Naive thymus-derived CD4-positive, alpha-beta T cell (primary cell): ENCODE measurements at regions of chr17 and their contacts with region 1.

Region 1: GRCh38 chr17:385926-386876 is 33.6 kb upstream of the RPH3AL start:
- DNase-seq: peak; percentile 27 to 79 (median 57)
- ATAC-seq: peak; percentile 89
- H3K4me3 ChIP-seq: no peak overlapping the region
- H3K4me3 Mint-ChIP-seq: peak overlapping the region; percentile 72 to 94 (median 86)
- H3K27ac ChIP-seq: no peak overlapping the region
- H3K27ac Mint-ChIP-seq: peak overlapping the region in 4 of 9 donors; percentile 39 to 77 (median 62)
- H3K4me1 ChIP-seq: no peaks in the 10 kb centered on the region
- H3K4me1 Mint-ChIP-seq: peaks cover 7 to 30% (median 23%) of the 10 kb centered on the region in 7 donors
- H3K27me3 ChIP-seq: no peaks in the 10 kb centered on the region
- H3K27me3 Mint-ChIP-seq: peaks cover 0 to 38% (median 0%) of the 10 kb centered on the region in 5 donors

Region 2: DNA sequence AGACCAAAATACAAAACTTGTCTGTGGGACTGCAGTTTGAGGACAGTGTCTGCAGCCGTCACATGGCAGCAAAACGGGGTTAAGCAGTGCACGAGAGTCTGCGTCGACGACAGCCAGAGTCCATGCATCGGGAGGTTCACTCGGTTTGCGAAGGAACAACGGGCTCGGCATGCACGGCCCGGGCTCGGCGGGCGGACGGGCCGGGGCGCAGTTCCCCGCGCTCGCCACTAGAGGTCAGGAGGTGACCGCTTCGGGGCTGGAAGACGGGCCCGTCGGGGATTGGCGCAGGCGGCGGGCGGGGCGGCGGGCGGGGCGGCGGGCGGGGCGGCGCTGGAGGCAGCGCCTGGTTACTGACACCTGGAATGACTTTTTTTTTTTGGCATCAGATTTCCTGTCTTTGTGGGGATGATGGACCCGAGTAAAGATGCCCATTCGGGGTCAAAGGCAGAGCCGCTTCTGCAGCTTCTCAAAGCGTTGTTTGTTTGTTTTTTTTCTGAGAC is 242.4 kb before region 1 on chr17:
- CTCF ChIA-PET with region 1: interaction called, 3 read pairs
- POLR2A ChIA-PET with region 1: no interaction called
- intact Hi-C with region 1: loop called (anchors 2 kb)
- DNase-seq: peak; percentile 72 to 94 (median 82)
- ATAC-seq: peak; percentile 98
- H3K4me3 ChIP-seq: no peak overlapping the region
- H3K4me3 Mint-ChIP-seq: peak overlapping the region in 1 of 10 donors; percentile 60
- H3K27ac ChIP-seq: no peak overlapping the region
- H3K27ac Mint-ChIP-seq: no peak overlapping the region
- H3K4me1 ChIP-seq: peaks cover 0 to 4% of the 10 kb centered on the region in 2 donors
- H3K4me1 Mint-ChIP-seq: peaks cover 0 to 6% (median 3%) of the 10 kb centered on the region in 7 donors
- H3K27me3 ChIP-seq: no peaks in the 10 kb centered on the region
- H3K27me3 Mint-ChIP-seq: peaks cover 0 to 12% (median 0%) of the 10 kb centered on the region in 5 donors

Region 3: DNA sequence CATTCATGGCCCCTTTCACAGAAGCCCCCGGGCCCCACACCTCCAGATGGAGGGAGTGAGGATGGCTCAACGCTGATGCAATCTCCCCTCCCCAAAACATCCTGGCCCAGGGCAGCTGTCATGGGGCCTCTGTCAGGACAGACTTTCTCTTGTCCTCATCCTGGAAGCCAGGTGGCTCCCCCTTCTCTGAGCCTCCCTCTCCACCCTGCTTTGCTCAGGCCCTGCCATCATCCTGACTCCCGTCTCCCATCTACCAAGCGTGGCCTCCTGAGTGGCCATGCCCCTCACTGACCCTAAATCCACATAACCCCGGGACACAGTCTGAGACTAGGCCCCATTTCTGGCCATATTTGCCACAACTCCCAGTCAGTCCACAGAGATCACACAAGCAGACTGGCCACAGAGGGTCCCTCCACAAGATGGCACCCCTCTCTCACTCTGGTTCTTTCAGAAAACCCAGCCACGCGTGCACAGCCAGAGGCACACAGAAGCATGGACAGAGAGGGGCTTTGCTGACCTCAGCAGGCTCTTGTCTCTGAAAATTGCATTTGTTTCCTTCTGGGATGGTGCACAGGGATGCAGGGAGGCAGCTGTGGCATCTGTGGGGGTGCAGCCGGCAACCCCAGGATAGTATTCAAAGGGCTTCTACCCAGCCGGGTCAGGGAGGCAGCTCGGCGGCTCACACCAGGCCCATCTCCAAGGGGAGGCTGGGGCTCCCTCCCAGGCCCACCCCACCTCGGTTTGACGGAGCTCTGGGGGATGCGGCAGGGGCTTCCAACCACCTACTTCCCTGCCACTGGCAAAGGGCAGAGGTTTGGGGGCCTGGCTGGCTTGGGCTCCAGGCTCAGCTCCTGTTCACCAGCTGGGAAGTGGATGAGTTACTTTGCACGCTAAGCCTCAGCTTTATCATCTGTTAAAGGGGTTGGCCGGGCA is 221.6 kb before region 1 on chr17:
- CTCF ChIA-PET with region 1: interaction called, 5 read pairs
- POLR2A ChIA-PET with region 1: no interaction called
- intact Hi-C with region 1: loop called in 1 of 2 experiments (anchors 2 kb)
- DNase-seq: peak in 7 of 9 donors; percentile 13 to 45 (median 28)
- ATAC-seq: peak; percentile 54
- H3K4me3 ChIP-seq: no peak overlapping the region
- H3K4me3 Mint-ChIP-seq: no peak overlapping the region
- H3K27ac ChIP-seq: no peak overlapping the region
- H3K27ac Mint-ChIP-seq: no peak overlapping the region
- H3K4me1 ChIP-seq: no peaks in the 10 kb centered on the region
- H3K4me1 Mint-ChIP-seq: peaks cover 0 to 4% (median 0%) of the 10 kb centered on the region in 7 donors
- H3K27me3 ChIP-seq: no peaks in the 10 kb centered on the region
- H3K27me3 Mint-ChIP-seq: peaks cover 0 to 10% (median 0%) of the 10 kb centered on the region in 5 donors

Region 4: GRCh38 chr17:292531-293382 is 93.4 kb before region 1 on chr17:
- CTCF ChIA-PET with region 1: no interaction called
- POLR2A ChIA-PET with region 1: no interaction called
- intact Hi-C with region 1: loop called in 1 of 2 experiments (anchors 5 kb)
- DNase-seq: peak in 4 of 9 donors; percentile 20 to 34 (median 24)
- ATAC-seq: peak; percentile 16
- H3K4me3 ChIP-seq: no peak overlapping the region
- H3K4me3 Mint-ChIP-seq: peak overlapping the region in 8 of 10 donors; percentile 53 to 85 (median 72)
- H3K27ac ChIP-seq: no peak overlapping the region
- H3K27ac Mint-ChIP-seq: peak overlapping the region in 4 of 9 donors; percentile 47 to 86 (median 64)
- H3K4me1 ChIP-seq: no peaks in the 10 kb centered on the region
- H3K4me1 Mint-ChIP-seq: peaks cover 0 to 16% (median 11%) of the 10 kb centered on the region in 7 donors
- H3K27me3 ChIP-seq: no peaks in the 10 kb centered on the region
- H3K27me3 Mint-ChIP-seq: peaks cover 0 to 18% (median 4%) of the 10 kb centered on the region in 5 donors

Region 5: GRCh38 chr17:307741-308507 is 78.3 kb before region 1 on chr17:
- CTCF ChIA-PET with region 1: interaction called, 5 read pairs
- POLR2A ChIA-PET with region 1: no interaction called
- intact Hi-C with region 1: loop called in 1 of 2 experiments (anchors 1 kb)
- DNase-seq: no peak
- ATAC-seq: no peak
- H3K4me3 ChIP-seq: no peak overlapping the region
- H3K4me3 Mint-ChIP-seq: no peak overlapping the region
- H3K27ac ChIP-seq: no peak overlapping the region
- H3K27ac Mint-ChIP-seq: peak overlapping the region in 4 of 9 donors; percentile 9 to 59 (median 24)
- H3K4me1 ChIP-seq: no peaks in the 10 kb centered on the region
- H3K4me1 Mint-ChIP-seq: peaks cover 0 to 4% (median 0%) of the 10 kb centered on the region in 7 donors
- H3K27me3 ChIP-seq: no peaks in the 10 kb centered on the region
- H3K27me3 Mint-ChIP-seq: peaks cover 0 to 10% (median 0%) of the 10 kb centered on the region in 5 donors

Region 6: DNA sequence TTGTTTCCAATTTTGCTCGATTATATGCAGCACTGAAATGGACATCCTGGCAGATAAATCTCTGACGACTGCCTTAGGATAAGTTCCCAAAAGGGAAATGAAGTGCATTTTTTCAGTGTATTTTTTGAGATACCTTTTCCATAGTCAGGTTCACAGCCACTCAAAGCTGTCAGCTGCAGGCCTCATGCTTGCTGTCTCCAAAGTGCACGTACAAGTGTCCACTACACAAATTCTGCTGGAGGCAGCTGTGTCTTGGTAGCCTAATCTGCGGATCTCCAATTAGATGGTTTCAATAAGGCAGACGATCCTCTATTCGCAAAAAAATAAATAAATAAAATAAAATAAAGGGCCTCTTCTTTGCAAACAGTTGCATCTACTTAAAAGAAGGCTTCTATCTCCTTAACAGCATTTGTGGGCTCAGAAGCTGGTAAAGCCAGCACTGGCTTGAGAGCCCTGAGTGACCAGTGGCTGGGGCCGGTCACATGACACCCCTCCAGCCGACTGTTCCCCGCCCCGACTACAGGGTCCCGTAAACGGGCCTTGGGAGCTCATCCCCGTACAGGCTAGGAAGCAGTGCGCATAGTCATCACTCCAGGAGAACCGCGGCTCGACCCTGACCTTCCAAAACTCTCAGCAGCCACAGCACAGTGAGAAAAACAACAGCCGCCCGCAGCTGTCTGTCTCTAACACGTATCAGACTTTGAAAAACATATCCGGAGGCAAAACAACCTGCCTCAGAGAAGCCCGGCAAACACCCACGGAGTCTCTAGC is 52.4 kb before region 1 on chr17:
- CTCF ChIA-PET with region 1: interaction called, 4 read pairs
- POLR2A ChIA-PET with region 1: interaction called, 3 read pairs
- intact Hi-C with region 1: loop called in 1 of 2 experiments (anchors 2 kb)
- DNase-seq: peak in 5 of 9 donors; percentile 34 to 60 (median 35)
- ATAC-seq: peak; percentile 40
- H3K4me3 ChIP-seq: no peak overlapping the region
- H3K4me3 Mint-ChIP-seq: peak overlapping the region in 8 of 10 donors; percentile 52 to 91 (median 81)
- H3K27ac ChIP-seq: peak overlapping the region; percentile 65
- H3K27ac Mint-ChIP-seq: peak overlapping the region in 7 of 9 donors; percentile 93 to 98 (median 95)
- H3K4me1 ChIP-seq: peaks cover 0 to 51% of the 10 kb centered on the region in 2 donors
- H3K4me1 Mint-ChIP-seq: peaks cover 14 to 86% (median 34%) of the 10 kb centered on the region in 7 donors
- H3K27me3 ChIP-seq: no peaks in the 10 kb centered on the region
- H3K27me3 Mint-ChIP-seq: peaks cover 0 to 32% (median 15%) of the 10 kb centered on the region in 5 donors

Region 7: DNA sequence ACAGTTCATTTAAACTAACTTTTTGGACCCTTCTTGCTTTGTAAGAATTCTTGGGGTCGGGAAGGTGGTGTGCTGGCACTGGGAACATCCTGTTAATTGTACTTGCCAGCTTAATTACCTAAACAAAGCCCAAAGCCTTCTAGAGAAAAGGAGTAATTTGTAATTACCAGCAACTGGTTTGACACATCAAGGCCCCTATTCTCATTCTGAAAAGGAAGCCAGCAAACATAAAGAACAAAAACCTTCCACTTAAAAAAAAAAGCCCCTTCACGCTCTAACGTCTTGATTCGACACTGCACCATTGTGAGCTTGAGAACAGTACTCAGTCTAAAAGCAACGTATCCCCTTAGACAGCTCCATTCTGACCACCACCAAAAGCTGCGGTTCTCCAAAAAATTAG is 41.1 kb after region 1 on chr17:
- CTCF ChIA-PET with region 1: no interaction called
- POLR2A ChIA-PET with region 1: no interaction called
- intact Hi-C with region 1: no loop called
- DNase-seq: no peak
- ATAC-seq: no peak
- H3K4me3 ChIP-seq: no peak overlapping the region
- H3K4me3 Mint-ChIP-seq: no peak overlapping the region
- H3K27ac ChIP-seq: no peak overlapping the region
- H3K27ac Mint-ChIP-seq: no peak overlapping the region
- H3K4me1 ChIP-seq: peaks cover 0 to under 1% of the 10 kb centered on the region in 2 donors
- H3K4me1 Mint-ChIP-seq: peaks cover 0 to 24% (median 7%) of the 10 kb centered on the region in 7 donors
- H3K27me3 ChIP-seq: no peaks in the 10 kb centered on the region
- H3K27me3 Mint-ChIP-seq: no peaks in the 10 kb centered on the region

Region 8: DNA sequence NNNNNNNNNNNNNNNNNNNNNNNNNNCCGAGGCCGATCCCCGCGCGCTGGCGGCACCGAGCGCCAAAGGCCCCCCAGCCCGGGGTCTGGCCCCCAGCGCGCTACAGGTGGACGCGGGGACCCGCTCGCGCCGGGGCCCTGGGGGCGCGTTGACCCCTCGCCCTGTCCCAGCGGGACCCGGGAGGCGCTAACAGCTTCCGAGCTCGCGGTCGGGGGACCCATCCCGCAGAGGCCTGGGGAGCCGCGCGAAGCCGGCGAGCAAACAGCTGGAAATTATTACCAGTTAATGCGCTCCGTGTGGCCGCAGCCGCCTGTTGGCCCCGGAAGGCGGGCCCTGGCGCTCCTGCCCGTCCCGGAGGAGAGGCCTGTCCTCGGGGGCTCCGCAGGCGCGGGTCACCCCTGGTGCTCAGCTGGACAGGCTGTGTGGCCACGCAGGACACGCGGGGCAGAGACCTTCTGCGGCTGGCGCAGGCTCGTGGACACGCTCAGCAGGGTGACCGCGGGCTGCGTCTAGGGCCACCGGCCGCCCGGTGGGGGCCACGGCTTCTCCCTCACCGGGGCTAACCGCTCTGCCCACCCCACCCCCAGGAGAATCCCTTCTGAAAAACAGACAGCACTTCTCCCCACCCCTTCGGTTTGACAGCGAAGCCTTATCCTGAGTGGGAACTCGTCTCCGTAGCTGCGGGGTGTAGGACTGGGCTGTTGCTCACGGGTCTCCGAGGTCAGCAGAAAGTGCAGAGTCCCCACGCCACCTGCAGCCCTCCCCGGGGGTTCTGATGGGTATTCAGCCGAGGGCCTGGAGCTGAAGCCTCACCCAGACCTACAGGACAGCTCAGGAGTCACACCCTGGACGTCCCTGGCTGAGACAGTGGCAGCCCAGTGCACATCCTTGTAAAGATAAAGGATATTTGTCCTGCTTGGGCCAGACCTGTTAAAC is 105.2 kb after region 1 on chr17:
- CTCF ChIA-PET with region 1: no interaction called
- POLR2A ChIA-PET with region 1: no interaction called
- intact Hi-C with region 1: no loop called
- DNase-seq: peak in 8 of 9 donors; percentile 15 to 67 (median 49)
- ATAC-seq: peak; percentile 34
- H3K4me3 ChIP-seq: peak overlapping the region; percentile 39
- H3K4me3 Mint-ChIP-seq: peak overlapping the region; percentile 33 to 88 (median 71)
- H3K27ac ChIP-seq: peak overlapping the region; percentile 36
- H3K27ac Mint-ChIP-seq: peak overlapping the region; percentile 45 to 91 (median 72)
- H3K4me1 ChIP-seq: peaks cover 0 to 12% of the 10 kb centered on the region in 2 donors
- H3K4me1 Mint-ChIP-seq: peaks cover 6 to 21% (median 12%) of the 10 kb centered on the region in 7 donors
- H3K27me3 ChIP-seq: no peaks in the 10 kb centered on the region
- H3K27me3 Mint-ChIP-seq: peaks cover 0 to 13% (median 0%) of the 10 kb centered on the region in 5 donors

Region 9: GRCh38 chr17:614653-615473 is 228.7 kb after region 1 on chr17:
- CTCF ChIA-PET with region 1: no interaction called
- POLR2A ChIA-PET with region 1: no interaction called
- intact Hi-C with region 1: no loop called
- DNase-seq: no peak
- ATAC-seq: peak; percentile 61
- H3K4me3 ChIP-seq: no peak overlapping the region
- H3K4me3 Mint-ChIP-seq: no peak overlapping the region
- H3K27ac ChIP-seq: no peak overlapping the region
- H3K27ac Mint-ChIP-seq: peak overlapping the region in 1 of 9 donors; percentile 6
- H3K4me1 ChIP-seq: no peaks in the 10 kb centered on the region
- H3K4me1 Mint-ChIP-seq: peaks cover 0 to 8% (median 0%) of the 10 kb centered on the region in 7 donors
- H3K27me3 ChIP-seq: no peaks in the 10 kb centered on the region
- H3K27me3 Mint-ChIP-seq: no peaks in the 10 kb centered on the region

Region 10: GRCh38 chr17:700504-701094 is 314.4 kb after region 1 on chr17:
- CTCF ChIA-PET with region 1: interaction called, 10 read pairs
- POLR2A ChIA-PET with region 1: no interaction called
- intact Hi-C with region 1: loop called in 1 of 2 experiments (anchors 10 kb)
- DNase-seq: peak in 7 of 9 donors; percentile 25 to 63 (median 58)
- ATAC-seq: peak; percentile 71
- H3K4me3 ChIP-seq: no peak overlapping the region
- H3K4me3 Mint-ChIP-seq: no peak overlapping the region
- H3K27ac ChIP-seq: no peak overlapping the region
- H3K27ac Mint-ChIP-seq: peak overlapping the region in 3 of 9 donors; percentile 46 to 53 (median 51)
- H3K4me1 ChIP-seq: no peaks in the 10 kb centered on the region
- H3K4me1 Mint-ChIP-seq: peaks cover 0 to 14% (median 6%) of the 10 kb centered on the region in 7 donors
- H3K27me3 ChIP-seq: no peaks in the 10 kb centered on the region
- H3K27me3 Mint-ChIP-seq: no peaks in the 10 kb centered on the region